Right ventricle myocardium inferior (tissue), 1 donor: ENCODE measurements at regions of chr1 and their contacts with region 1.

Region 1: GRCh38 chr1:248906009-248906752 is at the start of gene PGBD2:
- DNase-seq: peak; percentile 96
- ATAC-seq: peak; percentile 96
- total RNA-seq, gene PGBD2: 2.9 TPM

Region 2: DNA sequence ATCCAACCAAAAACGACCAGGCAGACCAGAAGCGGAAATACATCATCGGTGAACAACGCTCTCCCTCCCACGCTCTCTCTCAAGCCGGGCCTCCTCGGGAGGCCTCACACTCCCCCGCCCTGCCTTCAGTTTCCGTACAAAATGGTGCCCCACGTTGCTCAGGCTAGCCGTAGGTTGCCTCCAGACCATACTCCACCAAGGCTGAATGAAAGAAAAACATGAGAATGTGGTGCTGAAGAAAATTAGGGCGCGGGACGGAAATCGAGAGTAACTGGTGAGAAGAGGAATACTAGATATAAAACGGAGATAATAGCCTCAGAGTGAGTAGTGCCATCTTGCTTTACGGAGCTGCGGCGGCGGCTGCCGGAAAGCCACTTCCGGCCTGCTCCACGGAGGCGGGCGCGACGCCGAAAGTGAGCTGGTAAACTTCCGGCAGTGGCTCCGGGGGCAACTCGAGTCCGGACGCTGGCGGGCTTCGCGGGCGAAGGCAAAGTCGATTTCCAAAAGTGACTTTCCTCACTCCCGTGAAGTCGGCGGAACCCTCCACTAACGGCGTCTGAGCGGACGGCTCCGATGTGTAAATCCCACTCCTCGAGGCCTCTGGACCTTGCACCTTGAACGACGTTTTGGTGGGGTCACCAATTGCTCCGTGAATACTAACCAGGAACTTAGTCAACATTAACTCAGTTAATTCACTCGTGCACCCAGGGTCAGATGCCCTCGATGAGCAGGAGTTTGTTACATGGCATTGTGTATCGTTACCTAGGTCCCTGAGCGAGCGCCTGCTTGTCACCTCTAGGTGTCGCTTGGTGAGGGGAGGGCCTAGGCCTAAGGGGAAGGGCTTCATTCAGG is 80.0 kb before region 1 on chr1 and contains the start of gene SH3BP5L:
- intact Hi-C with region 1: loop called (anchors 1 kb)
- DNase-seq: peak; percentile 96
- ATAC-seq: peak; percentile 97
- total RNA-seq, gene SH3BP5L: 22.2 TPM

Region 3: GRCh38 chr1:248837794-248838356 is 68.3 kb before region 1 on chr1 and contains the start of gene ZNF672:
- intact Hi-C with region 1: loop called (anchors 2 kb)
- DNase-seq: peak; percentile 99
- ATAC-seq: peak; percentile 94
- total RNA-seq, gene ZNF672: 40.3 TPM

Region 4: DNA sequence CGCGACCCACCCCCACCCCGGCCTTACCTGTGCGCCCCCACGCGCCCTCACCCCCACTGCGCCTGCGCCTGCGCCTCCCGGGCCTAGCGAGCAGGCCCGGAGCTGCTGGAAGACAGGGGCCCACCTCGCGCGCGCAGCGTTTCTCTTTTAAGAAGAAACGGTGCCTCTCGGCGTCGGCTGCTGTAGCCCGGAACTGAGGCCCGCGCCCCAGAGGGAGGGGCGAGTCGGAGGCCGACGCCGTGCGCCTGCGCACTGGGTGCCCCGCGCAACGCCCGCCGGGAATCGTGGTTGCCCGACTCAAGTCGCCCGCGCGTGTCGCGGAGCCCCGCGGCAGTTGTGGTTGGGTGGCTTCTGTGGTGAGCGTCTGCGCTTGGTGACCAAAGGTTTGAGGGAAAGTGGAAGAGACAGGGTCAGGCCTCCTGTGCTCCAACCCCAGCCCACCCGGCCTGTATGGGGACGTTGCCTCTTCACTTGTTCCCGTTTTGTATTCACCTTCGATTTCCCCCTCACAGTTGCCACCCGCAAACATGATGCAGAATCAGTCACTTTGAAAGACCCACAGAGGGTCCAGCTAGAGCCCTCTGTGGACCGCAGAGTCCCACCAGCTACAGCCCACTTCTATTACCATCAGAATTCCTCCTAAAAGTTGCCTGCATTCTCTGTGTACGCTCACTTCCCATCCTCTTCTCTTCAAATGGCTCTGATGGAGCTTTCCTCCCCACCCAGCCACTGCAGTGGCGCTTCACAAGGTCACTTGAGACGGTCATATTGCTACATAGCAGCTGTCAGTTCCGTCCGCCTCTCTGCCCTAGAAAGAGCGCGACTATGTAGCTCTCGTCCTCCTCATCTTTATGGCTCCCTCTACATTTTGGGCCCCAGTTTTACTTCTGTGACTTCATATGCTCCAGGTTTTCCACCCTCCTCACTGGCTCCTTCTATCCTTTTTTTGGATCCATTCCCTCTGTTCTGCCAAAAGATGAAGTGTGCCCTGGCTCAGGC is 47.0 kb before region 1 on chr1 and contains the start of gene ZNF692:
- intact Hi-C with region 1: loop called (anchors 2 kb)
- DNase-seq: peak; percentile 100
- ATAC-seq: peak; percentile 93
- total RNA-seq, gene ZNF692: 20.8 TPM

Region 5: DNA sequence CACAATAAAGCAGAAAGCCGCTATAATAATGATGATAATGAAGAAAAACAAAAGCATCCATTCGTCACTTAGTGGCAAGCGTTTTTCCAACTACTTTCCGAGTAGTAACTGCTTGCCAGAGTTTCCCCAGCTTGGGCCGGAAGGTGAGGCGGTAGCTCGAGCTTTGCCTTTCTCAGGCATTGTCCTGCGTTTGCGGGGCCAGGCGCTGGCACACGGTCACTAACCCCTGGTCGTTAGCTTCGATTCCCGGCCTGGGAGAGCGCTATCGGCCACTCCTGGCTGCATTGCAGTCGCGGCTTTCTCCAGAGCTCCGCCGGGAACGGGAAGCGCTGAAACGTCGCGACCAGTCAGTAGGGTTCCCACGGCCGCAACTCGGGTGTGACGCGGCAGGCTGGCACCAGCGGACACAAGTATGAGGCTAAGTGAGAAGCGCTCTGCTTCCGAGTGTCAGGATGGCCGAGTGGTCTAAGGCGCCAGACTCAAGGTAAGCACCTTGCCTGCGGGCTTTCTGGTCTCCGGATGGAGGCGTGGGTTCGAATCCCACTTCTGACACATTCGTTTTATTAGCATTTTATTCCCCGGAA is 32.7 kb before region 1 on chr1:
- intact Hi-C with region 1: loop called (anchors 1 kb)
- DNase-seq: peak; percentile 96
- ATAC-seq: peak; percentile 94